ENCODE measurements at regions of chr3 and their contacts with region 1.

Region 1: DNA sequence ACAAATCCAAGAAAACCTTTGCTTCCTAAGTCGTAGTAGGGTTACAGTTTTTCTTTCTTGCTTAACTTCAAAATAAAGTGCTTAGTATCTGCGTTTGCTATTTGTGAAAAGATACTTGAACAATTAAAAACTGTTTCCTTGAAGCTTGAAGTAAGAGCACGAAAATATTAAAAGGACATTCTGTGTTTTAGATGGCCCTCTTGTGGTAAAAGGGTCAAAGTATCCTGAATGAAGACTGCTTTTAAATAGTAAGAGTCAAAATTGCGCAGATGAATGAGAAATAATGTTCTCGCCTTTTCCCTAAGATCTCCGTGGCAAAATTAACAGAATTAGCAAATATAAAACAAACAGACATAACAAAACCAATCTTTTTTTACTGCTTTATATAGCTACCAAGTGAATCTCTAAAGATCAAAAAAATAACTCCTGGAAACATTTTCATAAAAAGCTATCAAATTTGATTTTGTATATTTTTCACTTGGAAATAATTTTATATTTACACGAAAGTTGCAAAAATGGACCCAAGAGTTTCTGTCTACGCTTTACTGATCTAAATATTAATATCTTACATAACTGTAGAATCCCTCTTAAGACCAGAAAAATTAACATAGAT is 175.4 kb downstream of the MBNL1 start:
- DNase-seq: peak; percentile 65
- ATAC-seq: no peak
- H3K4me3 ChIP-seq: no peak overlapping the region
- H3K27ac ChIP-seq: no peak overlapping the region
- H3K4me1 ChIP-seq: peaks cover 8% of the 10 kb centered on the region
- H3K27me3 ChIP-seq: no peaks in the 10 kb centered on the region
- CTCF ChIP-seq: peak; percentile 72; the same call in 1 of the 2 replicates

Region 2: DNA sequence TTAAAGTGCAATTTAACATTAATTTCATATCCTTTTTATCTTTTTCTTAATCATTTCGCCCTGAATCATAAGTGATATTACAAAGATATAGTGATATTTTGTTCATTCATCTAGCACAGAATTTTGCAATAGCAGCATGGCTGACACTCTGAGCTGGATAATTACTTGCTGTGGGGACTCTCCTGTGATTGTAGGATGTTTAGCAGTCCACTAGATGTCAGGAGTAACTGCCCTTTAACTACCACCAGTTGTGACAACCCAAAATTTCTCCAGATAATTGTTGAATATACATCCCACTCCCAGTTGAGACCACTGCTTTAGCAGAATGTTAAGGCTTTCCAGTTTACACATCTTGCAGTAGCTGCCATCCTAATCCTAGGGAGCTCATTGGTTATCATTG is 372.2 kb before region 1 on chr3:
- CTCF ChIA-PET with region 1: interaction called, 5 read pairs
- POLR2A ChIA-PET with region 1: no interaction called
- in situ Hi-C with region 1: no loop called
- intact Hi-C with region 1: loop called (anchors 5 kb)
- DNase-seq: no peak
- ATAC-seq: peak; percentile 83
- H3K4me3 ChIP-seq: no peak overlapping the region
- H3K27ac ChIP-seq: no peak overlapping the region
- H3K4me1 ChIP-seq: no peaks in the 10 kb centered on the region
- H3K27me3 ChIP-seq: no peaks in the 10 kb centered on the region
- CTCF ChIP-seq: peak; percentile 71

Region 3: GRCh38 chr3:152183473-152183872 is 260.7 kb before region 1 on chr3:
- CTCF ChIA-PET with region 1: interaction called, 3 read pairs
- POLR2A ChIA-PET with region 1: no interaction called
- in situ Hi-C with region 1: no loop called
- intact Hi-C with region 1: loop called (anchors 5 kb)
- DNase-seq: no peak
- ATAC-seq: peak; percentile 58; the same call in 1 of the 2 replicates
- H3K4me3 ChIP-seq: no peak overlapping the region
- H3K27ac ChIP-seq: no peak overlapping the region
- H3K4me1 ChIP-seq: no peaks in the 10 kb centered on the region
- H3K27me3 ChIP-seq: no peaks in the 10 kb centered on the region
- CTCF ChIP-seq: peak; percentile 71

Region 4: DNA sequence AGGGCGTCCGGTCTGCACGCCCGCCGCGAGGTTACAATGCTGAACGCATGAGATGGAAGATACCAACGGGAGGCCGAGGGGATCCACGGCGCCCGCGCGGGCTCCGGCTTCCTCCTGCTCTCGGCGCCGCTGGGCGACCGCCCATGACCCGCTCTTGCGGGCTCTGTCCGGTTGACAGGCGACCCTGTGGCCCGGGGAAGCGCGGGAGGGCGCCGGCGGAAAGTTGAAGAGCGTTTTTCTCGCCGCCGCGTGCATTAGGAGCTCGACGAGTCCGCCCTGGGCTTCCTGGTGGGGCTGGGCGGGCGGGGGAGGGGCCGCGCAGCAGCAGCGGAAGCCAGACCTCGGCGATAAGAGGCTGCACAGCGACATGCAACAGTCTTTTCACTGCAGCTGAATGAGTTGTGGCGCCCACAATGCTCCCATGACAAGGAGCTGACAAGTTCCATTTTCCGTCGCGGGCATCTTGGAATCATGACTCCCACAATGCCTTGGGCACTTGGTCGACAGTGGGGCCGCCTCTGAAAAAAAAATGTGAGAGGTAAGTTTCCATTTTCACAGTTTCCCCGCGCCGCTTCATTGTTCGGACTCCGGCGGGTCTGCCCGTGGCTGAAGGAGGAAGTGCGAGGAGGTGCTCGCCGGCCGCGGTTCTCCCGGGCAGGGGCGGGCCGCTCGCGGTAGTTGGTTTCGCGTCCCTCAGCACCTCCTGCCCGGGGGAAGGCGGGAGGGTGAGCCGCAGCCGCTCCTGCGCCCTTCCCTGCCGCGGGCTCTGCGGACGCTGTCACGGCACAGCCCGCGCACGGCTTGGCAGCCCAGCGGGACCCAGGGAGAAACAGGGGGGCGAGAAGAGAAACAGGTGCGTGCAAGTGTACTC is 175.3 kb before region 1 on chr3 and contains the start of gene MBNL1:
- CTCF ChIA-PET with region 1: no interaction called
- POLR2A ChIA-PET with region 1: no interaction called
- in situ Hi-C with region 1: no loop called
- intact Hi-C with region 1: loop called (anchors 5 kb)
- DNase-seq: peak; percentile 47
- ATAC-seq: peak; percentile 91
- H3K4me3 ChIP-seq: peak within 1 kb of the TSS; percentile 90 to 99
- H3K27ac ChIP-seq: peak within 1 kb of the TSS; percentile 99
- H3K4me1 ChIP-seq: peaks cover 46% of the 10 kb centered on the region
- H3K27me3 ChIP-seq: no peaks in the 10 kb centered on the region
- CTCF ChIP-seq: no peak
- total RNA-seq, gene MBNL1: 140 TPM

Region 5: DNA sequence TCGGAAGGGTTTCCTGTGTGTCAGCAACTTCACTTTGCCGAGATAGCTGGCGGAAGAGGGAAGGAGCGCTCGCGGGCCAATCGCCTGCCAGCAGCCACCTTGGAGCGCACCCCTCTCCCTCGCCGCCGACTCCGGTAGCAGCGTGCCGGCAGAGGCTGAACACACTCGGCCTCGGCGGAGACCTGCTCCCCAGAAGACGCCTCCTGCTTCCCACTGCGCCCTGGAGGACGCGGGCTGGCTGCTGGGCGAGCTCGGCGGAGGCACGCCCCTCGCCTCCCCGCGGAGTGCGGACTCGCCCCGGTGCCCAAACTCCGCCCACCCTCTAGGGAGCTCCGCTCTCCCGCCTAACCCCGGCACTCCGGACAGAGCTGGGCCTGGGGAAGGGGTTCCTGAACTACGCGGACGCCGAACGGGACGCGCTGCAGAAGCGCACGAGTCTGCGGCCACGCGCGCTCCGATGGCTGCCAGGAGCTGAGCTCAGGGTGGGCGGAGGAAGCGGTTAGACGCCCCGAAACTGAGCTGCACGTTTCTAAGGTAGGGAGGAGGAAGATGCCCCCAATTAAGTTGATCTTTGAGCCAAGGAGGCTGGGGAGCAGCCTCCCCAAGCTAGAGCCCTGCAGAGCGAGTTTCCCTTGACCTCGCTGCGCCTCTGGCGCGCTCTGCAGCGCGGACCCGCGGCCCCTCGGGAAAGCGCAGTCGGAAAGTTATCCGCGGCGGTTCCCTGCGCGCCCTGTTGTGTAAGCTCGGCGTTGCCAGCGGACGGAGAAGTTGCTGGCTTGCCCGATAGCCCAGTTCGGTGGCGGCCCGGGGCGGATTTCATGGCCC is 390.9 kb after region 1 on chr3 and contains the start of gene P2RY1:
- CTCF ChIA-PET with region 1: no interaction called
- POLR2A ChIA-PET with region 1: no interaction called
- in situ Hi-C with region 1: no loop called
- intact Hi-C with region 1: no loop called
- DNase-seq: no peak
- ATAC-seq: peak; percentile 88
- H3K4me3 ChIP-seq: peak within 1 kb of the TSS; percentile 43 to 57
- H3K27ac ChIP-seq: no peak within 1 kb of the TSS
- H3K4me1 ChIP-seq: peaks cover 5% of the 10 kb centered on the region
- H3K27me3 ChIP-seq: peaks cover 16% of the 10 kb centered on the region
- CTCF ChIP-seq: peak; percentile 27; the same call in 1 of the 2 replicates
- total RNA-seq, gene P2RY1: 0.08 TPM